Posterior vena cava (tissue), 2 donors: ENCODE measurements at regions of chr20 and their contacts with region 1.

Region 1: DNA sequence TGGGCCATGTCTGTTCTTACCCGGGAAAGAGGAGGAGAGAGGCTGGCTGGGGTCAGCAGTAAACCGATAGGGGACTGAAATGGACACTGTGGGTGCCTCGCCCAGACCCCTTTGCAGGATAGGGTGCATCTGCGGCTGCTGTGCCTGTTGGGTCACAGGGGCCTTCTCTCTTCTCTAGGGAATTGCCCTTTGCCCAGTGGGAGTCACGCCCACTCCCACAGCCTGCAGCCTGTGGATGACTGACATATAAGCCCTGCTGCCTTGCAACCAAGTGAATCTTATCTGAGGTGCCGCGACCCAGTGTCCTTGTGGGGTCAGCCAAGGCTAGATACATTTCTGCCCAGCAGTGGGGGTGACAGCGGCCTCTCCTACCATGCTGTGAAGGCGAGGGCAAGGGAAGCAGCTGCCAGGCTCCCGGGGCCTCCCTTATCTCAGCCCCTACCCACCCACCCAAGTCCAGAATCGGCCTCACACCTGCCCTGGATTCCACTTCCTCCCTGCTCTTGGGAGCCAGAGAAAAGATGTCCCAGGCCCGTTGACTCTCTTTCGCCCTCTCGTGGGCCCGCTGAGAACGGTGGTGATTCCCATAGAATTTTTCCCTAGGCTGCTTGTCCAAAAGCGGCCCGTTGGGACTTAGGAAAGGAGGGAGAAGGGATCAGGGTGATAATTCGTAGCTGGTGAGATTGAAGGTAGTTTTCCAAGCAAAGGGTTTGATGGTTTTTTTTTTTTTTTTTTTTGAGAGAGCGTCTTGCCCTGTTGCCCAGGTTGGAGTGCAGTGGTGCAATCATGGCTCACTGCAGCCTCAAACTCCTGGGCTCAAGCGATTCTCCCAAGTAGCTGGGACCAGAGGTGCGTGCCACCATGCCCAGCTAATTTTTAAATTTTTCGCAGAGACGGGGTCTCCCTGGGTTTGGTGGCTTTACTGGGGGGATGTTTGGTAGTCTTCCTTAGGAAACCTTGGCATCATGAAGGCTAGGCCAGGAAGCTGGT is 76.4 kb upstream of the RNF24 start:
- DNase-seq: peak; percentile 90

Region 2: DNA sequence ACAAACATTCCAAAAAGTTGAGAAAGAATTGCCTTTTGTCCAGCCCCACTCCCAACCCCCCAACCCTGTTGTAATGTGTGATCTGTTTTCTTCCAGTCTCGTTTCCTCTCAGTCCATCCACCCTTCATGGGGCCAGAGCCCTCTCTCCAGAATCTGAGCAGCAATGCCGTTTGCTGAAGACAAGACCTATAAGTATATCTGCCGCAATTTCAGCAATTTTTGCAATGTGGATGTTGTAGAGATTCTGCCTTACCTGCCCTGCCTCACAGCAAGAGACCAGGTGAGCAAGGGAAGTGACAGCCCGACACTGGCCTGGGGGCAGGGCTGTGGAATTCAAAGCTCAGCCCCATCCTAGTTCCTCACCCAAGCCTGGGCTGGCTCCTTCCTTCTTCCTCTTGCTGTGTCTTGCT is 237.3 kb before region 1 on chr20:
- intact Hi-C with region 1: no loop called
- DNase-seq: no peak

Region 3: GRCh38 chr20:4018015-4018748 is 73.6 kb before region 1 on chr20:
- intact Hi-C with region 1: loop called (anchors 2 to 5 kb)
- DNase-seq: no peak

Region 4: GRCh38 chr20:4064144-4064909 is 27.5 kb before region 1 on chr20:
- intact Hi-C with region 1: no loop called
- DNase-seq: peak; percentile 96

Region 5: GRCh38 chr20:4406627-4407026 is 314.8 kb after region 1 on chr20:
- intact Hi-C with region 1: no loop called
- DNase-seq: no peak

Region 6: DNA sequence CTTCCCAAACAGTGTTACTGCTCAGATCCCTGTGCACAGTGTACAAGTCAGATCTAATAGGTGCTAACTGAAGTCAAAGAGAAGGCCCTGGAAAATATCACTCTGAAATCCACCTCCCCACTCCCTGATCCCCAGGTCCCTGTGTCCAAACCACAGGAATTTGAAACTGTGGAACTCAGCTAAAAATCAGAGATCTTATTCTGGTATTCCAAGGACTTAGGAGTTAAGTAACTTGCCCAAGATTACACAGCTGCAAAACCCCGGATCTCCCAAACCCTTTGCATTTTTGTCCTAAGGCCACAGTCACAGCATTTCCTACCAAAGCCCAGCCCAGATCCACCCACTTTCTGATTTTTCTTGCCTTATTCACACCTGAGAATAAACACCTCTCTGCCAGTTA is 941.8 kb after region 1 on chr20:
- intact Hi-C with region 1: no loop called
- DNase-seq: no peak